Aorta (tissue), 5 donors: ENCODE measurements at regions of chr14 and their contacts with region 1.

Region 1: GRCh38 chr14:74913986-74914573 is 9.0 kb downstream of the RPS6KL1 start:
- DNase-seq: peak; percentile 30 to 86
- ATAC-seq: peak; percentile 78
- H3K4me3 ChIP-seq: no peak overlapping the region
- H3K27ac ChIP-seq: no peak overlapping the region
- H3K4me1 ChIP-seq: no peaks in the 10 kb centered on the region
- H3K27me3 ChIP-seq: no peaks in the 10 kb centered on the region

Region 2: DNA sequence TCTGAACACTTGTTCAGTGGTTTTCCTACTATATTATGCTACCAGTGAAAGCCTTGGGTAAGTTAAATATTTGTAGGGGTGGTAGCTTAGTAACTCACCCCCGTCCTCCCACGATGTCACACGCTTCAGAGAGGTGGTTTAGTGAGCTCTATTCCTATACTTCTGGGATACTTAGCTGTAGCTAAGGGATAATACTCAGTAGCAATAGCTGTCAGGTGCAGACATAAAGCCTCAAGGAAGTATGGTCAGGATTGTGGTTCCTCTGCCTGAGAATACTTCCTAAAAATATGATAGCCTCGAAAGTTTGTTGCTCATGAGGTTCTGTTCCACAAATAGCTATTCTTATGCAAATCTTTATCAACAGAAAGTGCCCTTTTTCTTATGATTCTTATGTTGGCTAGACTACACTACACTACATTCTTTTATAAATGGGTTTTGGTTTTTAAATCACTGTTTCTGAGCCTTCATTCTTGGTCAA is 20.4 kb before region 1 on chr14:
- intact Hi-C with region 1: no loop called
- DNase-seq: no peak
- ATAC-seq: no peak
- H3K4me3 ChIP-seq: no peak overlapping the region
- H3K27ac ChIP-seq: no peak overlapping the region
- H3K4me1 ChIP-seq: no peaks in the 10 kb centered on the region
- H3K27me3 ChIP-seq: no peaks in the 10 kb centered on the region

Region 3: DNA sequence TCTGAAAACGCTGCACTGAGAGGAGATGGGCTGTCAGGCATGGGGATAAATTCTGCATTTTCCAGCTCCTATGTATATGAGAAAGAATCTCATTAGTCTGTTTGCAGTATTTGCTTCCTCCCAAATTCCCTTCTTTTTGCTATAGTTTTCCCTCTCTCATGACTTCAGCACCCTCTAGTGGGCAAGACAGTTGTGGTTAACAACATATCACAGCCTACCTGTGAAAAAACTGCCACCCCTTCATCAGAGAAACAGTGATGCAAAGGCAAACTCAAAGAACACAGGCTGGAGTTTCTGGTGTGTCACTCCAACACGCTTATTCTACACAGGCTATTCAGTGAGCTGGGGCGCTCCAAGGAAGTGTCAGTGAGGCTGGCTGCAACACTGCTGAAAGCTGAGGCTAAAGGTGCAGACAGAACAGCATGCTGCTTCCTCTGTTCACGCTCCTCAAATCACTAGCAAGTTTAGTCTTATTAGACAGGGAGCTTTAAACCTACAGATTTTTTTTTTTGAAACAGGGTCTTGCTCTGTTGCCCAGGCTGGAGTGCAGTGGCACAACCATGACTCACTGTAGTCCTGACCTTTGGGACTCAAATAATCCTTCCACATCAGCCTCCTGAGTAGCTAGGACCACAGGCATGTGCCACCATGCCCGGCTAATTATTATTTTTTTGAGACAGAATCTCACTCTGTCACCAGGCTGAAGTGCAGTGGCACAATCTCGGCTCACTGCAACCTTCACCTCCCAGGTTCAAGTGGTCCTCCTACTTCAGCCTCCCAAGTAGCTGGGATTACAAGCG is 174.7 kb after region 1 on chr14:
- intact Hi-C with region 1: loop called (anchors 1 to 5 kb)
- DNase-seq: no peak
- ATAC-seq: no peak
- H3K4me3 ChIP-seq: no peak overlapping the region
- H3K27ac ChIP-seq: no peak overlapping the region
- H3K4me1 ChIP-seq: no peaks in the 10 kb centered on the region
- H3K27me3 ChIP-seq: no peaks in the 10 kb centered on the region